Activated CD8-positive, alpha-beta T cell treated with anti-CD3 and anti-CD28 coated beads, Interleukin-2, amount 10 ng/mL, durations not matched to agents 7 days and 5 days (primary cell): ENCODE measurements at regions of chr2 and their contacts with region 1.

Region 1: GRCh38 chr2:112996635-112997034 is 8.6 kb upstream of the IL36A start:
- DNase-seq: peak; percentile 88
- ATAC-seq: peak; percentile 97
- H3K4me3 Mint-ChIP-seq: peak overlapping the region; percentile 40
- H3K27ac Mint-ChIP-seq: peak overlapping the region; percentile 79
- H3K4me1 Mint-ChIP-seq: peaks cover 31% of the 10 kb centered on the region
- H3K27me3 Mint-ChIP-seq: no peaks in the 10 kb centered on the region

Region 2: DNA sequence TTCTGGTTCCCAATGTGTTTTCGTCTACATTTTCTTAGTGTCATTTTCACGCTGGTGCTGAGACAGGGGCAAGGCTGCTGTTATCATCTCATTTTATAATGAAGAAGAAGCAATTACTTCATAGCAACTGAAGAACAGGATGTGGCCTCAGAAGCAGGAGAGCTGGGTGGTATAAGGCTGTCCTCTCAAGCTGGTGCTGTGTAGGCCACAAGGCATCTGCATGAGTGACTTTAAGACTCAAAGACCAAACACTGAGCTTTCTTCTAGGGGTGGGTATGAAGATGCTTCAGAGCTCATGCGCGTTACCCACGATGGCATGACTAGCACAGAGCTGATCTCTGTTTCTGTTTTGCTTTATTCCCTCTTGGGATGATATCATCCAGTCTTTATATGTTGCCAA is 11.5 kb before region 1 on chr2:
- CTCF ChIA-PET with region 1: interaction called, 7 read pairs
- POLR2A ChIA-PET with region 1: interaction called, 12 read pairs
- DNase-seq: peak; percentile 76
- ATAC-seq: peak; percentile 98
- H3K4me3 Mint-ChIP-seq: peak overlapping the region; percentile 9
- H3K27ac Mint-ChIP-seq: peak overlapping the region; percentile 70
- H3K4me1 Mint-ChIP-seq: peaks cover 21% of the 10 kb centered on the region
- H3K27me3 Mint-ChIP-seq: no peaks in the 10 kb centered on the region

Region 3: DNA sequence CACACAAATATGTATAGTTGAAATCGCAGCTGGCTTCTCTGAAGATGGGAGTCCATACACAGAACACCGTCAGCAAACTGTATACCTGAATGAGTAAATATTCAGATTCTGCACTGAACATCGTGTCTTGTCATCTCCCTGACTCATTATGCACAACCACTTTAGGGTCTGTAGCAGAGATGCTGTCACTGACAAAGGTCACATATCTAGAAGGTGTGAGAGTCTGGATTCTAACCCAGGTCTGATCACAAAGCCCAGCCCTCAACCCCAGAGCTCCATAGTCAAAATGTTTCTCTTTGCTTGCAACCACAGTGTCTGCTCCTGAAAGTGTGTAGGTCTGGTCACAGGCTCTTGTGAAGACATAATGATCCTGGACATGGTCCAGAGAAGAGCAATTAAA is 360.4 kb after region 1 on chr2:
- CTCF ChIA-PET with region 1: no interaction called
- POLR2A ChIA-PET with region 1: no interaction called
- DNase-seq: no peak
- ATAC-seq: no peak
- H3K4me3 Mint-ChIP-seq: no peak overlapping the region
- H3K27ac Mint-ChIP-seq: no peak overlapping the region
- H3K4me1 Mint-ChIP-seq: peaks cover 39% of the 10 kb centered on the region
- H3K27me3 Mint-ChIP-seq: peaks cover 22% of the 10 kb centered on the region